ENCODE measurements at regions of chr7 and their contacts with region 1.

Region 1: GRCh38 chr7:123865517-123866117 is 20.6 kb downstream of the HYAL4 start:
- DNase-seq: peak in 25 of 35 experiments; percentile 4 to 73 (median 18)
- ATAC-seq: peak in 2 of 4 experiments; percentile 56 to 60
- H3K4me3 ChIP-seq: no peak overlapping the region
- H3K4me3 Mint-ChIP-seq: no peak overlapping the region
- H3K27ac ChIP-seq: no peak overlapping the region
- H3K27ac Mint-ChIP-seq: no peak overlapping the region
- H3K4me1 ChIP-seq: no peaks in the 10 kb centered on the region
- H3K4me1 Mint-ChIP-seq: no peaks in the 10 kb centered on the region
- H3K27me3 ChIP-seq: no peaks in the 10 kb centered on the region
- H3K27me3 Mint-ChIP-seq: peaks cover 0 to 12% of the 10 kb centered on the region in 2 donors

Region 2: DNA sequence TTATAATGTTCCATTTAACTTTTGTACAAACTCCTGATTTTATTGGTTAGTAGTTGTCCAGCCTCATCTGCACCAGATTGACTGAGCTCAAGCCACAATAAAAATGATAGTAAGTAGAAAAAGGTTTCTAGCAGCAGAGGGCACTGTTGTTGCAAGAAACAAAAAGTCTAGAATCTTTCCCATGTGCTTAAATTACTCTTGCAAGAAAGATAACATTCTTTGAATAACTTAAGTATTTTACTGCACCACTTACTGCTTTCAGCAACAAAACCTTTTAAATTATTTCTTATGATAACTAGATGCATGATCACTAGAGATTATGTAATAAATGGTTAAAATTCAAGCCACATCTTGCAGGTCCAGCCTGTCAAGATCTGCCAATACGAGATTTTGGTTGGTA is 182.9 kb before region 1 on chr7:
- CTCF ChIA-PET with region 1: interaction called, 5 to 24 read pairs
- POLR2A ChIA-PET with region 1: no interaction called
- DNase-seq: peak in 8 of 35 experiments; percentile 2 to 62 (median 9)
- ATAC-seq: no peak
- H3K4me3 ChIP-seq: no peak overlapping the region
- H3K4me3 Mint-ChIP-seq: no peak overlapping the region
- H3K27ac ChIP-seq: no peak overlapping the region
- H3K27ac Mint-ChIP-seq: no peak overlapping the region
- H3K4me1 ChIP-seq: no peaks in the 10 kb centered on the region
- H3K4me1 Mint-ChIP-seq: no peaks in the 10 kb centered on the region
- H3K27me3 ChIP-seq: no peaks in the 10 kb centered on the region
- H3K27me3 Mint-ChIP-seq: no peaks in the 10 kb centered on the region

Region 3: DNA sequence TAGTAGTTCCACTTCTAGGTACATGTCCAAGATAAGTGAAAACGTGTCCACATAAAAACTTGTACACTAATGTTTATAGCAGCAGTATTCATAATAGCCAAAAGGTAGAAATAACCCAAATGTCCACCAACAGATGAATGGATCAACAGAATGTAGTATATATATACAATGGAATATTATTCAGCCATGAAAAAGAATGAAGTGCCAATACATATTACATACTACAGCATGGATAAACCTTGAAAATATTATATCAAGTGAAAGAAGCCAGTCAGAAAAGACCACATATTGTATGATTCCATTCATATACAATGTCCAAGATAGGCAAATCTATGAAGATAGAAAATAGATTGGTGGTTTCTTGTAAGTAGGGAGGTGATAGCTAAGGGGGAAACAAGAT is 69.0 kb before region 1 on chr7:
- CTCF ChIA-PET with region 1: interaction called, 4 to 10 read pairs
- POLR2A ChIA-PET with region 1: no interaction called
- DNase-seq: no peak
- ATAC-seq: no peak
- H3K4me3 ChIP-seq: no peak overlapping the region
- H3K4me3 Mint-ChIP-seq: no peak overlapping the region
- H3K27ac ChIP-seq: no peak overlapping the region
- H3K27ac Mint-ChIP-seq: no peak overlapping the region
- H3K4me1 ChIP-seq: no peaks in the 10 kb centered on the region
- H3K4me1 Mint-ChIP-seq: no peaks in the 10 kb centered on the region
- H3K27me3 ChIP-seq: no peaks in the 10 kb centered on the region
- H3K27me3 Mint-ChIP-seq: peaks cover 0 to 5% of the 10 kb centered on the region in 2 donors

Region 4: GRCh38 chr7:123809476-123809875 is 56.1 kb before region 1 on chr7:
- CTCF ChIA-PET with region 1: no interaction called
- POLR2A ChIA-PET with region 1: no interaction called
- DNase-seq: no peak
- ATAC-seq: no peak
- H3K4me3 ChIP-seq: no peak overlapping the region
- H3K4me3 Mint-ChIP-seq: no peak overlapping the region
- H3K27ac ChIP-seq: no peak overlapping the region
- H3K27ac Mint-ChIP-seq: no peak overlapping the region
- H3K4me1 ChIP-seq: no peaks in the 10 kb centered on the region
- H3K4me1 Mint-ChIP-seq: no peaks in the 10 kb centered on the region
- H3K27me3 ChIP-seq: no peaks in the 10 kb centered on the region
- H3K27me3 Mint-ChIP-seq: peaks cover 4 to 8% of the 10 kb centered on the region in 2 donors

Region 5: DNA sequence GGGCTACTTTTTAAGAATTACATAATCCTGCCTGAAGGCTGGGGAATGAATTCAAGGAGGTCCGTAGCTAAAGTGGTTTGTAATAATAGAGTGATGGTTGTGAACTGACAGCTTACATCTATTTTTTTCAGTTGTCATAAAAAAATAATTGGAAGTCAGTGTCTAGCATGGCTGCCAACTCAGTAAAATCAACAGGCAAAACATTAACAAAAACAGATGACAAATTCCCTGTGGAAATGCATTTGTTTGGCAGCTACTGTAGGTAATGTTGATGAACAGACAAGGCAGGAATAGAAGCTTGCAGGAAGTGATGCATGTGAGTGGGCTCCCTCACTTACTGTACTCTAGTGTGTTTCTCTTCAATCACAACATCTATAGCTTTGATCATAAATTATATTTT is 1830.0 kb after region 1 on chr7:
- CTCF ChIA-PET with region 1: no interaction called
- POLR2A ChIA-PET with region 1: no interaction called
- DNase-seq: no peak
- ATAC-seq: no peak
- H3K4me3 ChIP-seq: no peak overlapping the region
- H3K4me3 Mint-ChIP-seq: no peak overlapping the region
- H3K27ac ChIP-seq: no peak overlapping the region
- H3K27ac Mint-ChIP-seq: no peak overlapping the region
- H3K4me1 ChIP-seq: no peaks in the 10 kb centered on the region
- H3K4me1 Mint-ChIP-seq: no peaks in the 10 kb centered on the region
- H3K27me3 ChIP-seq: no peaks in the 10 kb centered on the region
- H3K27me3 Mint-ChIP-seq: no peaks in the 10 kb centered on the region